Caco-2 (cell line): ENCODE measurements at regions of chr3 and their contacts with region 1.

Region 1: GRCh38 chr3:118793176-118793575 is 241.5 kb downstream of the IGSF11 start:
- DNase-seq: peak in 1 of 2 experiments; percentile 21
- H3K4me3 ChIP-seq: no peak overlapping the region
- H3K4me3 Mint-ChIP-seq: no peak overlapping the region
- H3K27ac Mint-ChIP-seq: peak overlapping the region; percentile 21
- H3K4me1 ChIP-seq: peaks cover 18% of the 10 kb centered on the region
- H3K4me1 Mint-ChIP-seq: peaks cover 35% of the 10 kb centered on the region
- H3K27me3 ChIP-seq: no peaks in the 10 kb centered on the region
- H3K27me3 Mint-ChIP-seq: no peaks in the 10 kb centered on the region
- CTCF ChIP-seq: no peak

Region 2: GRCh38 chr3:118760585-118761290 is 32.4 kb before region 1 on chr3:
- CTCF ChIA-PET with region 1: no interaction called
- POLR2A ChIA-PET with region 1: no interaction called
- intact Hi-C with region 1: no loop called
- DNase-seq: peak; percentile 31 to 35
- H3K4me3 ChIP-seq: no peak overlapping the region
- H3K4me3 Mint-ChIP-seq: no peak overlapping the region
- H3K27ac Mint-ChIP-seq: no peak overlapping the region
- H3K4me1 ChIP-seq: no peaks in the 10 kb centered on the region
- H3K4me1 Mint-ChIP-seq: peaks cover 6% of the 10 kb centered on the region
- H3K27me3 ChIP-seq: no peaks in the 10 kb centered on the region
- H3K27me3 Mint-ChIP-seq: no peaks in the 10 kb centered on the region
- CTCF ChIP-seq: peak; percentile 26 to 55

Region 3: GRCh38 chr3:118808723-118809122 is 15.5 kb after region 1 on chr3:
- CTCF ChIA-PET with region 1: no interaction called
- POLR2A ChIA-PET with region 1: no interaction called
- intact Hi-C with region 1: loop called (anchors 1 kb)
- DNase-seq: peak; percentile 50 to 52
- H3K4me3 ChIP-seq: no peak overlapping the region
- H3K4me3 Mint-ChIP-seq: no peak overlapping the region
- H3K27ac Mint-ChIP-seq: no peak overlapping the region
- H3K4me1 ChIP-seq: no peaks in the 10 kb centered on the region
- H3K4me1 Mint-ChIP-seq: no peaks in the 10 kb centered on the region
- H3K27me3 ChIP-seq: no peaks in the 10 kb centered on the region
- H3K27me3 Mint-ChIP-seq: no peaks in the 10 kb centered on the region
- CTCF ChIP-seq: no peak

Region 4: DNA sequence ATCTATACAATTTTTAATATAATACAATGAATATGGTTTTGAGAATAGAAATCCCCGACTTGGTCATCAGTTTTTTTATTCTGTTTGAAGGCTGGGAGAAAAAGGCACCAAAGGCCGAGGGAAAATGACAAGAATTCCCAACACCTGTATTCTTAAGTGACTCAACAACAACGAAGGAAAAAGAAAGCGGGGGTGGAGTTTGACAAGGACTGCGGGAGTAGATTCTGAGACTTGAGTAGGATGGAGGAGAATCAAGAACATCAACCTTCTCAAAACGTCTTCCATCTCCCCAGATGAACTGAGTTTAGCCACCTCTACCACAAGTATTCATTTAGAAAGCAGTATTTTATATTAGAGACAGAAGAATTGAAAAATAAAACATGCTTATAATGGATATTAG is 134.3 kb after region 1 on chr3:
- CTCF ChIA-PET with region 1: no interaction called
- POLR2A ChIA-PET with region 1: no interaction called
- intact Hi-C with region 1: no loop called
- DNase-seq: no peak
- H3K4me3 ChIP-seq: no peak overlapping the region
- H3K4me3 Mint-ChIP-seq: no peak overlapping the region
- H3K27ac Mint-ChIP-seq: no peak overlapping the region
- H3K4me1 ChIP-seq: no peaks in the 10 kb centered on the region
- H3K4me1 Mint-ChIP-seq: no peaks in the 10 kb centered on the region
- H3K27me3 ChIP-seq: no peaks in the 10 kb centered on the region
- H3K27me3 Mint-ChIP-seq: peaks cover 11% of the 10 kb centered on the region
- CTCF ChIP-seq: no peak